CD14-positive monocyte (primary cell): ENCODE measurements at regions of chrX and their contacts with region 1.

Region 1: GRCh38 chrX:105645667-105646357 is 176.5 kb upstream of the NRK start:
- DNase-seq: no peak
- H3K4me3 ChIP-seq: no peak overlapping the region
- H3K4me3 Mint-ChIP-seq: no peak overlapping the region
- H3K27ac ChIP-seq: no peak overlapping the region
- H3K27ac Mint-ChIP-seq: peak overlapping the region in 1 of 7 donors; percentile 2
- H3K4me1 ChIP-seq: no peaks in the 10 kb centered on the region
- H3K4me1 Mint-ChIP-seq: no peaks in the 10 kb centered on the region
- H3K27me3 ChIP-seq: no peaks in the 10 kb centered on the region
- H3K27me3 Mint-ChIP-seq: no peaks in the 10 kb centered on the region
- CTCF ChIP-seq: no peak

Region 2: GRCh38 chrX:105331244-105331643 is 314.6 kb before region 1 on chrX:
- intact Hi-C with region 1: no loop called
- DNase-seq: no peak
- H3K4me3 ChIP-seq: no peak overlapping the region
- H3K4me3 Mint-ChIP-seq: no peak overlapping the region
- H3K27ac ChIP-seq: no peak overlapping the region
- H3K27ac Mint-ChIP-seq: no peak overlapping the region
- H3K4me1 ChIP-seq: no peaks in the 10 kb centered on the region
- H3K4me1 Mint-ChIP-seq: no peaks in the 10 kb centered on the region
- H3K27me3 ChIP-seq: no peaks in the 10 kb centered on the region
- H3K27me3 Mint-ChIP-seq: no peaks in the 10 kb centered on the region
- CTCF ChIP-seq: no peak

Region 3: DNA sequence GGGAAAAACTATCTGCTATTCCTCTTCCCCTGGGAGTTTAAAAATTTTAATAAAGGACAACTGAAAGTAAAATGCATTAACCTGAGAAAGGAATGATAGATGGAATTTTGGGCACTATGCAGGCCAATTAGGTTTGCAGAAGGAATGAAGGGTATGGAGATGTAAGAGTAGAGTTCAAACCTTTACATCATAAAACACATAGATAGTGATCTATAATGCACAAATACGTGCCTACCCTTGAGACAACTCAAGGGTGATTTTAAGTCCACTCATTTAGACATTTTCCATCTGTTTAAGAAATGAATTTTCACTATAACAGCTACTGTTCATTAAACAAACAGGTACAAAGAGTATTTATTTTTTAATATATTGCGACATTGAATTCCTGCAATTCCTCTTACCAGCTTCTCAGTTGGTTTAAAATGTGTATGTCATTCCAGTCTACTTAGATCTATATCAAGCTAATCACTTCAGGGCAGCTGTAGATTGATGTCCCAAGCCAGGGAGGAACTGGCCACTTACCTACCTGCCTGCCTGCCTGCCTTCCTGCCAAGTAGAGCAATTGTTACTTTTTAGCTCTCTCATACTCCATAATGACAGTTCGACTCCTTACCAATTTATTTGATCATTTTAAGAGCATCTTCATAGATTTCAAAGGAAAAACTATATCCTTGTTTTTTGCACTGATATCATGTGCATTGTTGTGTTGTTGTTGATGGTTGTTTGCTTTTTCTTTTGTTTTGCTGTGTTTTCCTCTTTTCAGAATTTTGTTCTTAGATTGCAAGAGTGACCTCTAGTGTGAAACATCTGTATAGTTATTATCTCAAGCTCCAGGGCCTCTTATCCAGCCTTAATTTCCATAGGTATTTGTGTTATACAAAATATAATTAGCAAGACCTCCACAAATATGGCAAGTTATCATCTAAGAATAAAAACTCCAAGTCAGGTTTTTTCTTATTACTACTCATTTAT is 55.6 kb after region 1 on chrX:
- intact Hi-C with region 1: loop called in 1 of 2 experiments (anchors 10 kb)
- DNase-seq: no peak
- H3K4me3 ChIP-seq: no peak overlapping the region
- H3K4me3 Mint-ChIP-seq: no peak overlapping the region
- H3K27ac ChIP-seq: no peak overlapping the region
- H3K27ac Mint-ChIP-seq: no peak overlapping the region
- H3K4me1 ChIP-seq: no peaks in the 10 kb centered on the region
- H3K4me1 Mint-ChIP-seq: no peaks in the 10 kb centered on the region
- H3K27me3 ChIP-seq: no peaks in the 10 kb centered on the region
- H3K27me3 Mint-ChIP-seq: peaks cover 0 to 3% (median 1%) of the 10 kb centered on the region in 3 donors
- CTCF ChIP-seq: no peak

Region 4: DNA sequence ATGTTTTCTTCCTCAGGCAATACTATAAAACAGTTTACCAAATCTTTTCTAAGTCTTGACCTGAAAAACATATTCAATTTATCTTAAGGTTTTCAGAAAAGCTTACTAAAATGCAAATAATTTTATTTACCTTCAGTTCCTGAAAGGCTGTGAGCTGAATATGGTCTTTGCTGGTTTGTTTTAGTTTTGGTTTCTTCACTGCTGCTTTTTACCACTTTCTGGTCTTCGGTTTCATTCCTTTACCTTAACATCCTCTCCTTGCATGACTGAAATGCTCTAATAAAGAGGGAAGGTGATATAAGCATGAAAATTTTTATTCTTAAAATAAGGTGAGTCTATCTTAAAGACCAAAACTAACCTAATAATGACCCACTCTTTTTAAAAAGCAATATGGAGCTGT is 79.4 kb after region 1 on chrX:
- intact Hi-C with region 1: no loop called
- DNase-seq: no peak
- H3K4me3 ChIP-seq: no peak overlapping the region
- H3K4me3 Mint-ChIP-seq: no peak overlapping the region
- H3K27ac ChIP-seq: no peak overlapping the region
- H3K27ac Mint-ChIP-seq: no peak overlapping the region
- H3K4me1 ChIP-seq: no peaks in the 10 kb centered on the region
- H3K4me1 Mint-ChIP-seq: no peaks in the 10 kb centered on the region
- H3K27me3 ChIP-seq: no peaks in the 10 kb centered on the region
- H3K27me3 Mint-ChIP-seq: peaks cover 0 to 2% (median 0%) of the 10 kb centered on the region in 3 donors
- CTCF ChIP-seq: no peak